Left ventricle myocardium superior (tissue), 1 donor: ENCODE measurements at regions of chr19 and their contacts with region 1.

Region 1: GRCh38 chr19:51439021-51439465 is 19.2 kb downstream of the SIGLEC8 start:
- DNase-seq: no peak
- ATAC-seq: no peak

Region 2: DNA sequence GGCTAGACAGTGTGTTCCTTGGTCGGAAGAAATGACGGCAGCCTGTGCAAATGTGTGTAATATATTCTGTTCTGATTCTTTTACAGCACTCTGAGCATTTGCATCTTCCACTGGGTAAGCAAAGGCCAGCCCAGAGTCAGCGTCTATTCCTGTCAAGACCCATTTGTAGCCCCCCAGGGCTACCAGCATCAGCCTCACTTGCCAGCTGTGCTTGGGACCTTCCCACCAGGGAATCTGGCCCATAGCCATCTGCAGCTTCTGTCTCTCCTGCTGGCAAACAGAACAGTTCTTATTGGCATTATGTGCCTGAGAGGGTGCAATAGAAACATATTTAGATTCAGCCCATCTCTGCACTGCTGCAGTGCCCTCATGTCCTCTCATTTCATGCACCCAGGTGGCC is 133.6 kb before region 1 on chr19:
- intact Hi-C with region 1: no loop called
- DNase-seq: no peak
- ATAC-seq: no peak

Region 3: DNA sequence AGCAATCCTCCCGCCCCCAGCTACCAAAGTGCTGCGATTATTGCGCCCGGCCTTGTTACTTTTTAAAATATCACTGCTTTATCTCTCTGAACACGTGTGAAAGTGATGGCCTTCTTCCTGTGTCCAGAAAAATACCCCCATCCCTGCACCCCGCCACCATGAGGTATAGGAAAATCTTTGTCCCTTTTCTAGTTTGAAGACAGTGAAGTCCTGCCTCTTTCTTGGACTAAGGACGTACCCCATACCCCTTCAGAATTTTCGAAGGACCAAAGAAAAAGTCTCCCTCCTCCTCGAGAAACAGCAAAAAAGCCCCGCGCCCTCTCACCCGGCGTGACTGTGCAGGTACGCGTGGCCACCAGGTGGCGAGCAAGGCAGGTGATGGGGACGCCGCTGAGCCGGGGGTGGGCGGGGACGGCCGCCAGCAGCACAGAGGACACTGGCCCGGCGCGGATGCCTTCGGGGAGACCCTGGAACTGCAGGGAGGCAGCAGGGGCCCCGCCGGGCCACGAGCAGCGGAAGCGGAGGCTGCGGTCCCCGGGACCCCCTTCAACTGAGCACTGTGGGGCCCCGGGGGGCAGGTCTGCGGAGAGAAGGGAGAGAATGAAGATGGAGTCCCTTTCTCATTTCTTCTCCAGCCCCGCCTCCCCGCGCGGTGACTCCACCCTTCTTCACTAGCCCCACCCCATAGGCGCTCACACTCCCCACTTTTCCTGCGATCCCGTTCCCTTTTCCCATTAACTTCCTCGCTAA is 100.3 kb before region 1 on chr19:
- intact Hi-C with region 1: loop called (anchors 10 kb)
- DNase-seq: peak; percentile 89
- ATAC-seq: peak; percentile 78